ENCODE measurements at regions of chr15 and their contacts with region 1.

Region 1: DNA sequence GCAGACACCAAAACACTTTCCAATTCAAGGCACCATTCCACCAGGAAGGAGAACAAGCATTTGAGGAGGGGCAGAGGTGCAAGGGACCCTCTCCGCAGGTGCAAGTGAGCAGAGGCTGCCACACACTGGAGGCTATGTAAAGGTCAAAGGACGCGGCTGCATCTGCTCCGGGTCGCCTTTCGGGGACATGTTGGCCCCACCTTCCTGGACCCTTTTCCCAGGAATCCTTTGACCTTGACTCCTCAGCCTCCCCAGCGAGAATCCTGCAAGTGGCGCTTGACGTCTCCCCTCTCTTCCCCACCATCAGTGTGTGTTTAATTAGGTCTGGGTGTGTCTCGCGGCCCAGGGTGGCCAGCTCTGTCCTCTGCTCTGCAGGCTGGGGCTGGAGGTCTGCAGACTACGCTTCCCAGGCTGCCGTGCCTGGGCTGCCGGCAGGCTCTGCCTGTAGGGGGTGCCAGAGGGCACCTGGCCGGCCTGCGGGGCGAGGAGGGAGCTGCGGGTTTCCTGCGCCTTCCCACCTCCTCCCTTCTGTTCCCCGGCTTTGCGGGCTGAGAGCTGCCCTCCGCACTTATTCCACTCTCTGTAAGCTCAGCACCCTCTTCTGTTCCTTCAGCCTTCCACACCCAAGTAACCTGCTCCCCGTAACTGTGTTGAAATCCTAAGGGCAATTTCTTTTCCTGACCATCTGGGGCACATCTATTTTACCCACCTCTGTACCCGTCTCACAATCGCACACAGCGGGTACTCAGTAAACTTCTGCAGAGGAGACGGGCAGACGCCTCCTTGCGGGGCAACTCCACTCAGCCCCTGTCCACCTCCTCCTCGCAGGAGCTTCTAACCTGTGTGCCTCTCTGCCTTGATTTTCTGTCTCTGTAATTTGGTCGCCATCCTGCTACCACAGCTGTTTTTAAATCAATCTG is 129.8 kb downstream of the NSMCE3 start:
- DNase-seq: peak; percentile 66
- H3K4me3 Mint-ChIP-seq: no peak overlapping the region
- H3K27ac Mint-ChIP-seq: no peak overlapping the region
- H3K4me1 Mint-ChIP-seq: peaks cover 6% of the 10 kb centered on the region
- H3K27me3 Mint-ChIP-seq: peaks cover 40% of the 10 kb centered on the region

Region 2: DNA sequence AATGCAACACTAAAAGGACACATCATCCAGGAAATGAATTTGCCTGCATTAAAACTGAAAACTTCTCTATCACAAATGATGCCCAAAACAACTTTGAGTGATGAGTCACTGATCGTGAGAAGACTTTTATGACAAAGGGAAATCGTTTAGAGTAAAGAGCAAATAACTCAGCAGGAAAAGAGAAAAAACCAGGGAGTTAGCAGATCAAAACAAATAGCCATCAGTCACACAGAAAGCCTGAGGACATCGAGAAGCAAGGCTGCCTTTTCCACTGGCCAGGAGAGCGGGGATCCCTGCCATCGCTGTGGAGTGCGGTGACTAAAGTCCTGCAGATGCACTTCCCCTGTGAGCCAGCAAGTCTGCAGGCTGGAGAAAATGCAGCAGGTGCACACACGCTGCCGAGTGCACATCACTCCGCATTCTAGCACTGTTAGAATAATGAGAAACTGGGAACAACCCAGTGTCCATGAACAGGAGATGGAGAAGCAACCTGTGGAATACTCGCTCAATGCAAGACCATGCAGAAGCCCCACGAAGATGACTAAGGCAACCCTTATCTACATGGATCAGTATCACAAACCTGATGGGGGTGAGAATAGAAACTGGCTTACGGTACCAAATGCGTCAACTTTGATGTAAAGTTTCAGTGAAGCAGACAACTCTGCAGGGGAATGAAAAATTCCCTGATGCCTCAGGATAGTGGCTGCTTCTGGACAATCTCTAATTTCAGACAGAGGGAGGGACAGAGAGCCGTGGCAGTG is 43.5 kb after region 1 on chr15:
- CTCF ChIA-PET with region 1: interaction called, 3 read pairs
- POLR2A ChIA-PET with region 1: no interaction called
- intact Hi-C with region 1: loop called (anchors 2 kb)
- DNase-seq: peak; percentile 16
- H3K4me3 Mint-ChIP-seq: no peak overlapping the region
- H3K27ac Mint-ChIP-seq: no peak overlapping the region
- H3K4me1 Mint-ChIP-seq: peaks cover 10% of the 10 kb centered on the region
- H3K27me3 Mint-ChIP-seq: peaks cover 19% of the 10 kb centered on the region